ENCODE measurements at regions of chr1 and their contacts with region 1.

Region 1: DNA sequence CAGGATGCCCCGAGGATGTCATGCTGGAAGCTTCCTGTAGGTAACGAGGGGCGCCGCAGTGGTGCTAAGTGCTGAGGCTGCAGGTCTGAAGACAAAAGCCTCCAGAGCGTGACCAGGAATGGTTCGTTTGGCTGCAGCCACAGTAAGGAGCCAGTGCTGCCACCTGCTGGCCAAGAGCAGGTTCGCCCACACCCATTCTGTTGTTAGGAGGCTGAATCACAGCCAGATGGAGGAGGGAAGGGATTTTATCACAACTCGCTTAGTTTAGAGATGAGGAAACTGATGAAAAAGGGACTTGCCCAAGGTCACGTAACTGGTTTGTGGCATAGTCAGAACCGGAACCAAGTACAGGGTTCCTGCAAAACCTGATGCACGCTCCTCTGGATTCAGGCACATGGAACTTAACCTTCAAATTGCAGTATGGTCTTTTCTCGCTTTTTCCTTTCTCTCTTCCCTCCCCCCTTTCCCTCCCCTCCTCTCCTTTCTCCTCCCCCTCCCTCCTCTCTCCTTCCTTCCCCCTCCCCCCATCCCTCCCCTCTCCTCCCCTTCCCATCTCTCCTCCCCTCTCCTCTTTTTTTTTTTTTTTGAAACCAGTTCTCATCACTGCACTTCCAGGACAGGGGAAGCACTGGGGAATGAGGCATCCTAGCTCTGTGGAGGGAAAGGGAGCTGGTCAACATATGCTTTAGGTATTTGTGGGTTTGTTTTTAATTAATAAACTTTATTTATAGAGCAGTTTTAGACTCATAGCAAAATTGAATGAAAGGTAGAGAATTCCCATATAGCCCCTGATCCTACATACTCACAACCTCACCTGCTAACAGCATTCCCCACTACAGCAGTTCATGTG is 81.8 kb downstream of the MPZL1 start:
- DNase-seq: peak; percentile 55
- H3K4me3 ChIP-seq: peak overlapping the region; percentile 1; the same call in 1 of the 2 replicates
- CTCF ChIP-seq: peak; percentile 99

Region 2: GRCh38 chr1:167791281-167792187 is 12.0 kb before region 1 on chr1:
- CTCF ChIA-PET with region 1: interaction called, 13 read pairs
- POLR2A ChIA-PET with region 1: interaction called, 7 read pairs
- DNase-seq: peak; percentile 99
- H3K4me3 ChIP-seq: no peak overlapping the region
- CTCF ChIP-seq: peak; percentile 7

Region 3: DNA sequence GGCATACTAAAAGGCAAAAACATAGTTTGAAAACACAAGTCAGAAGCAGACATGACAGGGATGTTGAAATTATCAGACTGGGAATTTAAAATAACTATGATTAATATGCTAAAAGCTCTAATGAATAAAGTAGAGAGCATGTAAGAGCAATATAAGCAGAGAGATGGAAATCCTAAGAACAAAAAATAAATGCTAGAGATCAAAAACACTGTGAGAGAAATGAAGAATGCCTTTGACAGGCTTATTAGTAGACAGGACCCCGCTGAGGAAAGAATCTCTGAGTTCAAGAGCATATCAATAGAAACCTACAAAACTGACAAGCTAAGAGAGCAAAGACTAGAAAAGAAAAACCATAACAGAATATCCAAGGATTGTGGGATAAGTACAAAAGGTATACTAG is 12.1 kb after region 1 on chr1:
- CTCF ChIA-PET with region 1: interaction called, 15 read pairs
- POLR2A ChIA-PET with region 1: no interaction called
- DNase-seq: no peak
- H3K4me3 ChIP-seq: no peak overlapping the region
- CTCF ChIP-seq: no peak